Thyroid gland (tissue), 4 donors: ENCODE measurements at regions of chr15 and their contacts with region 1.

Region 1: GRCh38 chr15:70679919-70680231 is 83.5 kb downstream of the UACA start:
- DNase-seq: no peak
- H3K4me3 ChIP-seq: no peak overlapping the region
- H3K27ac ChIP-seq: no peak overlapping the region
- H3K4me1 ChIP-seq: peaks cover 6 to 21% of the 10 kb centered on the region in 2 donors
- H3K27me3 ChIP-seq: no peaks in the 10 kb centered on the region
- CTCF ChIP-seq: peak in 1 of 6 experiments; percentile 4
- POLR2A ChIP-seq: no peak

Region 2: DNA sequence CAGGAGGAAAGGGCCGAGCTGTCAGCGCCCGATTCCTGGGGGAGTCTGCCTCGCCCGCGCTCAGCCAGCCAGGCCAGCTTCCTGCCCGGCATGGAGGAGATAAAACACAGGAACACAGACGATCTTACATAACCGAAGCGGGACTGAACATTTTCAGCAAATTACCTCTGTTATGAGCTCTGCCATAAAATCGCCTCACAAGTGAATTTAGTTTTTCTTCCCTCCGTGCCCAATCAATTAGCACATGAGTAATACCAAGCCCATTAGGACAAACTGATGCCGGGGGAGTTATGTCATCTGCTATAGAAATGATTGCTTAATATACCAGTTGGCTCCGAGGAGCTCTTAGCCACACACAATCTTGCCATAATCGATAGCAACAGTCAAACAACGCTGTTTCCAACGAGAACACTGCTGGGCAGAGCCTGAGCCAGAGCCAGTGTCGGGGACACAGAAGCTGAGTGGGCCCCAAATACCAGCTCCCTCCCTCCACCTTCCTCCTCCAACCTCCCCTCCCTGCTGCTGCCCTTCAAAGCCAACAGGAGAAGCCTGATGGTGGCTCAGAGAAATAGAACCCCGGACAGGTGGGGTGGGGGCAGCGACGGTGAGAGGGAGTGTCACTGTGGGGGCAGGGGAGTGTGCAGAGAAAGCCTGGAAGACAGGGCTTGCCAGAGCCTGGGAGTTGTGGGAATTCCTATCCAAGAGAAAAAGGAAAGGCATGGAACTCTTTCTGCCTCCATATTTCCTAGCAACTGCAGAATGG is 302.8 kb before region 1 on chr15:
- intact Hi-C with region 1: no loop called
- DNase-seq: peak; percentile 35 to 45
- H3K4me3 ChIP-seq: no peak overlapping the region
- H3K27ac ChIP-seq: no peak overlapping the region
- H3K4me1 ChIP-seq: peaks cover 0 to 7% of the 10 kb centered on the region in 2 donors
- H3K27me3 ChIP-seq: no peaks in the 10 kb centered on the region
- CTCF ChIP-seq: no peak
- POLR2A ChIP-seq: no peak

Region 3: DNA sequence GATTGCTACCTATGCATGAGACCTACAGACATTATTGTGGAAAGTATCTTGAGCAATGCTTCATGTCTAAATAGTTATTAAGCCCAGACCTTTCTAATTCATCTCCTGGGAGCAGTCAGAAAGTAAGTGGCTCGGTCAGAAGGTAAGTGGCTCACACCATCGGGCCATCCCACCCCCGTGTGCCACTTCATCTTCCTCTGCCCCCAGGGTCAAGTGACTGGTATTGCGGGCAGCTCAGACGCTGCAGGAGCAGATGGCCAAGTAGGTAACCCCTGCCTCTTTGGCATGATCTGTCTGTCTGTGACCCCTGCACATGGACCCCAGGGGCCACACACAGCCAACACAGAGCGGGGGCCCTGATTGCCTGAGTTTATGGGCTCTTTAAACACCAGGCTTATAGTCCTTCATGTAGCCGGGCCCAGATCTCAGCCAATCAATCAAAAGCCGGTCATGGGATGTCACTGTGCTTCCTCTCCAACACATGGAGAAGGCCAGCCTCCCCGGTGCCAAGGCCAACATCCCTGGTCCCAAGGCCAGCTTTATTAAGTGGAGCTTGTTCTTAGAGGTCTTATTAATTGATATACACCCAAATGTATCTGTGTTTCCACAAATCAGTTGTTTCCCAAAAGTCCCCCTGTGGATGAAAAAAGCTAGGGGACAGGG is 131.2 kb after region 1 on chr15:
- intact Hi-C with region 1: loop called (anchors 5 kb)
- DNase-seq: no peak
- H3K4me3 ChIP-seq: no peak overlapping the region
- H3K27ac ChIP-seq: no peak overlapping the region
- H3K4me1 ChIP-seq: peaks cover 19 to 34% of the 10 kb centered on the region in 2 donors
- H3K27me3 ChIP-seq: no peaks in the 10 kb centered on the region
- CTCF ChIP-seq: no peak
- POLR2A ChIP-seq: no peak

Region 4: DNA sequence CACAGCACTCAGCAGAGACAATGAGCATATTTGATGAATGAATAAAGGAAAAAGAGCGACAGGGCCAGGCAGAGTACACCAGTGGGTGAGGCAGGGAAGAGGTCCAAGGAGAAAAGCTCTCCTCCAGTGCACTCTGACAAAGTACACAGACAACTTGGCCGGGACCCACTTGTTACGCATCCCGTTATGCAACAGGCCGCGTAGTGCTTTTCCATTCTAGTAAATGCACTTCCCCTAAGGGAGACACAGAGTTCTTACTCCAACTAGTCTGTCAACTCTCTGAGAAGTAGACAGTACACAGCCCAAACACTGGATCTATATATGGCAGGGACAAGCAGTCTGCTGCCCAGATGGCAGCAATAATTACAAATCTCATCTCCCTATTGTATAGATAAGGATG is 155.5 kb after region 1 on chr15:
- intact Hi-C with region 1: no loop called
- DNase-seq: peak; percentile 37 to 53
- H3K4me3 ChIP-seq: no peak overlapping the region
- H3K27ac ChIP-seq: peak overlapping the region in 2 of 3 donors; percentile 34 to 56
- H3K4me1 ChIP-seq: peaks cover 4 to 27% of the 10 kb centered on the region in 2 donors
- H3K27me3 ChIP-seq: no peaks in the 10 kb centered on the region
- CTCF ChIP-seq: no peak
- POLR2A ChIP-seq: no peak